ENCODE measurements at regions of chrX and their contacts with region 1.

Region 1: DNA sequence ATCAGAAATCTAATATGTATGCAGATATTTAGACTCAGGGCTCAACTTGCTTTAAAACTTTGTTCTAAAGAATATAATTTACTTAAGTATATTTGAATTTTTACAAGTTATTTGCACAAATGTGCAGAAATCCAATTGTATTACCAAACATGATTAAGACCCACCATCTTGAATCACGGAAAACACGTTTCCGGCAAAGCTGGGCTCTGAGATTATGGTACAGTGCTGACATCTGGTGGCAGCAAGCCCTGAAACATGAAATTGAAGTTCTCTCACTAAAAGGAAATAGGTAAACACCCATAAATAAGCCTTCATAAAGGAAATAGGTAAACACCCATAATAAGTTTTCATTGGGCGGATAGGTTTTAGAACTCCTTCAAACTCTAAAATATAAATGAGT is 98.3 kb upstream of the MAOA start:
- DNase-seq: peak; percentile 31
- H3K4me3 ChIP-seq: no peak overlapping the region
- H3K27ac ChIP-seq: no peak overlapping the region
- H3K4me1 ChIP-seq: peaks cover 5% of the 10 kb centered on the region
- H3K27me3 ChIP-seq: no peaks in the 10 kb centered on the region
- CTCF ChIP-seq: peak; percentile 69 to 81

Region 2: DNA sequence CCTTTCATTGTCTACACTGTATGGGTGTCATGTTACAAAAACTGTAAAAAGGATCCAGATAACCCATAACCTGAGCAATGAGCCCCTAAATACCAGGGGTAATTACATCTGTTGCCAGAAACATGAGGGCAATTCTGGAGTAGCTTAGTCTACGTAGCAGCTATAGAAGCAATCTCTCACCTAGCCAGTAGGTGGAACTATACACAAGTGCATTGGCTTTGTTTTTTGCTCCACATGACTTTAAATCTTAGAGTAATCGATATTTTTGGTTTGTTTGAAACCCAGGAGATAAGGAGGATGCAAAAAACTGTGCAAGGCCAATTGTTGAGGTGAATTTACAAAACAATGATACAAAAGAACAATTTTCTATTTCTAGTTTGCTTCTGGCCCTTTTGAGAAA is 1776.3 kb before region 1 on chrX:
- CTCF ChIA-PET with region 1: no interaction called
- dilution Hi-C with region 1: no loop called
- in situ Hi-C with region 1: loop called in 1 of 2 experiments (anchors 25 kb)
- intact Hi-C with region 1: loop called (anchors 5 kb)
- DNase-seq: peak; percentile 23
- H3K4me3 ChIP-seq: no peak overlapping the region
- H3K27ac ChIP-seq: no peak overlapping the region
- H3K4me1 ChIP-seq: peaks cover 7% of the 10 kb centered on the region
- H3K27me3 ChIP-seq: peaks cover 2% of the 10 kb centered on the region
- CTCF ChIP-seq: peak; percentile 77 to 83

Region 3: GRCh38 chrX:42678125-42678524 is 879.7 kb before region 1 on chrX:
- CTCF ChIA-PET with region 1: no interaction called
- dilution Hi-C with region 1: no loop called
- in situ Hi-C with region 1: no loop called
- intact Hi-C with region 1: loop called (anchors 10 kb)
- DNase-seq: peak; percentile 9
- H3K4me3 ChIP-seq: no peak overlapping the region
- H3K27ac ChIP-seq: no peak overlapping the region
- H3K4me1 ChIP-seq: no peaks in the 10 kb centered on the region
- H3K27me3 ChIP-seq: peaks cover 2% of the 10 kb centered on the region
- CTCF ChIP-seq: peak; percentile 13 to 48

Region 4: DNA sequence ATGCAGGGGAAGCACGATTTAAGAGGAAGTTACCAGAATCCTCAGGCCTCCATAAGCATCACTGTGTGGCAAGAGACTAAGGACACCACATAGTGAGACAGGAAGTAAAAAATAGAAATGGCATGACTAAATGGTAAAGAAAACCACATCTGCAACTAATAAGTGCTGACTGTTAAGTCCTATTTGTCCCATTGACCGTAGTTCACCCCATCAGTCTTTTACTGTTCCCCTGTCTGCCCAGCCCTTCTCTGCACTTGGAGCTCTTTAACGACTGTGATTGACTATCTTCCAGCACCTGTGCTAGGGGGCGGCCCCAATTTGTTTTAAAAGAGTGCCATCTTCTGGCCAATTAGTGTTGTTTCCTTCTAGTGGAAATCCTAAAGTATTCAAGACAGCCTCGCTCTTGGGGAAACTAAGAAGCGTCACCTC is 192.5 kb after region 1 on chrX:
- CTCF ChIA-PET with region 1: interaction called, 9 read pairs
- dilution Hi-C with region 1: loop called (anchors 10 kb)
- in situ Hi-C with region 1: loop called (anchors 5 to 10 kb)
- intact Hi-C with region 1: loop called (anchors 1 kb)
- DNase-seq: peak; percentile 51
- H3K4me3 ChIP-seq: no peak overlapping the region
- H3K27ac ChIP-seq: no peak overlapping the region
- H3K4me1 ChIP-seq: no peaks in the 10 kb centered on the region
- H3K27me3 ChIP-seq: no peaks in the 10 kb centered on the region
- CTCF ChIP-seq: peak; percentile 47 to 52

Region 5: DNA sequence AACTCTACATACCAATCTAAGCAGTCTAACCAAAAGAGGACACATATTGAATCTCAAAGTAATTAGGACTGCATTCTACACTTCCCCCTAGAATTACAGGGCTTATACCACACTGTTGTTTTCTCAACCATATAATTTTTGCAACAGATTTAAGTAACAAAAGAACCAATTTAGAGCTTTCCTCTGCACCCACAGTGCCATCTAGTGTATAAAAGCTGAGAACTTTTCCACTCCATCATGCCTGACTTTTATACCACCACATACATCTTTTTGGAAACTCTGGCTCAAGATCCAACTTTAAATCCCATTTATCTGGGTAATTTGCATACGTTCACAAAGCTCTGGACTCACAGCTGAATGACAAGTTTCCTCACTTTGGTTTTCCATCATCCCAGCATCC is 686.2 kb after region 1 on chrX:
- CTCF ChIA-PET with region 1: no interaction called
- dilution Hi-C with region 1: no loop called
- in situ Hi-C with region 1: no loop called
- intact Hi-C with region 1: loop called (anchors 10 kb)
- DNase-seq: peak; percentile 26
- H3K4me3 ChIP-seq: no peak overlapping the region
- H3K27ac ChIP-seq: no peak overlapping the region
- H3K4me1 ChIP-seq: no peaks in the 10 kb centered on the region
- H3K27me3 ChIP-seq: peaks cover 13% of the 10 kb centered on the region
- CTCF ChIP-seq: peak; percentile 60 to 64

Measured in mammary epithelial cell (primary cell).